ENCODE measurements at regions of chr6 and their contacts with region 1.

Region 1: GRCh38 chr6:25942561-25943147 is 12.2 kb upstream of the SLC17A2 start:
- ATAC-seq: peak in 6 of 8 experiments; percentile 42 to 94 (median 82)
- H3K4me3 ChIP-seq: no peak overlapping the region
- H3K27ac ChIP-seq: no peak overlapping the region
- H3K4me1 ChIP-seq: no peaks in the 10 kb centered on the region

Region 2: GRCh38 chr6:25229671-25230321 is 712.9 kb before region 1 on chr6:
- in situ Hi-C with region 1: loop called in 1 of 9 experiments (anchors 25 kb)
- ATAC-seq: peak in 3 of 8 experiments; percentile 32 to 91 (median 89)
- H3K4me3 ChIP-seq: no peak overlapping the region
- H3K27ac ChIP-seq: no peak overlapping the region
- H3K4me1 ChIP-seq: no peaks in the 10 kb centered on the region

Measured in motor neuron (in vitro differentiated cells).